ENCODE measurements at regions of chr16 and their contacts with region 1.

Region 1: GRCh38 chr16:67993189-67994039 is 5.9 kb downstream of the DPEP2 start:
- DNase-seq: peak; percentile 81
- H3K4me3 Mint-ChIP-seq: peak overlapping the region; percentile 76
- H3K27ac Mint-ChIP-seq: peak overlapping the region; percentile 95
- H3K4me1 Mint-ChIP-seq: peaks cover 22% of the 10 kb centered on the region
- H3K27me3 Mint-ChIP-seq: no peaks in the 10 kb centered on the region

Region 2: DNA sequence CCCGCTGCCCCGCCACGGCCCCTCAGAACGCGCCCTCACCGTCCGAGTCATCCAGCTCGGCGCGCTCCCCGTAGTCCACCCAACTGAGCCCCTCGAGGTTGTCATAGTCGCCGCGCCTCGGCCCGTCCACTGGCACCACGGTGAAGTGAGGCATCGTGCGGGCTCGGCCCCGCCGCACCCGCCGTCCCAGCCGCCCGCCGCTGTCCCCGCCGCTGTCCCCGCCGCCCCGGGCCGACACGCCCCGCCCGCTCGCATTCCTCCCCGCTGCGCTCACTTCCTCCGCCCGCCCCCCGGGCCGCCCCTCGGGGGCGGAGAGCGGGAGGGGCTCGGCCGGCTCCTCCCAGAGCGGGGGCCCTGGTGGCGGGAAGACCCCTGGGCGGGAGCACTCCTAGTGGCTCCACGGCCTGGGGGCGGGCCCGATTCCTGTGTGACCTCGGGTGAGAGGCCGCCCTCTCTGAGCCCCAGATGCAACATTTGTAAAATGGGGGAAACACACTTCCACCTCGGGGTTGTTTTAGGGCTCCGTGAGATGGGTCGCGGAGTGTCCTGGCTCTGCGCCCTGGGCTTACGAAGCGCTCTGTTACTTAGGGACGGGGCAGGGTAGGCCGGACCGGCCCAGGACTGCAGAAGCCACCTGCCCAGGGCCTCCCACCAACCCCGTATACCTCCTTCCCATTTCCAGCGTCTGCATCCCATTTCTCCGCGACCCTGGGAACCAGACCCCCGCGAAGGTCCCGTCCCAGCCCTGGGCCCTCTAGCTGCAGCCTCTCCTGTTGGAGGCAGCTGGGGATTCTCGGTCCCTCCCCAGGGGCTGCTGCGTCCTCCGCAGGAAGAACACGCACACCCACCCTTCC is 24.8 kb before region 1 on chr16 and contains the start of gene SLC12A4:
- intact Hi-C with region 1: loop called (anchors 1 kb)
- DNase-seq: peak; percentile 89
- H3K4me3 Mint-ChIP-seq: peak within 1 kb of the TSS; percentile 99
- H3K27ac Mint-ChIP-seq: peak within 1 kb of the TSS; percentile 96
- H3K4me1 Mint-ChIP-seq: peaks cover 40% of the 10 kb centered on the region
- H3K27me3 Mint-ChIP-seq: no peaks in the 10 kb centered on the region
- total RNA-seq, gene SLC12A4: 40.0 and 43.1 TPM in 2 replicates

Region 3: GRCh38 chr16:67979955-67980678 is 13.3 kb before region 1 on chr16 and contains the start of gene DPEP3:
- intact Hi-C with region 1: loop called (anchors 1 kb)
- DNase-seq: no peak
- H3K4me3 Mint-ChIP-seq: no peak within 1 kb of the TSS
- H3K27ac Mint-ChIP-seq: no peak within 1 kb of the TSS
- H3K4me1 Mint-ChIP-seq: peaks cover 17% of the 10 kb centered on the region
- H3K27me3 Mint-ChIP-seq: no peaks in the 10 kb centered on the region
- total RNA-seq, gene DPEP3: not detected in 2 replicates

Region 4: DNA sequence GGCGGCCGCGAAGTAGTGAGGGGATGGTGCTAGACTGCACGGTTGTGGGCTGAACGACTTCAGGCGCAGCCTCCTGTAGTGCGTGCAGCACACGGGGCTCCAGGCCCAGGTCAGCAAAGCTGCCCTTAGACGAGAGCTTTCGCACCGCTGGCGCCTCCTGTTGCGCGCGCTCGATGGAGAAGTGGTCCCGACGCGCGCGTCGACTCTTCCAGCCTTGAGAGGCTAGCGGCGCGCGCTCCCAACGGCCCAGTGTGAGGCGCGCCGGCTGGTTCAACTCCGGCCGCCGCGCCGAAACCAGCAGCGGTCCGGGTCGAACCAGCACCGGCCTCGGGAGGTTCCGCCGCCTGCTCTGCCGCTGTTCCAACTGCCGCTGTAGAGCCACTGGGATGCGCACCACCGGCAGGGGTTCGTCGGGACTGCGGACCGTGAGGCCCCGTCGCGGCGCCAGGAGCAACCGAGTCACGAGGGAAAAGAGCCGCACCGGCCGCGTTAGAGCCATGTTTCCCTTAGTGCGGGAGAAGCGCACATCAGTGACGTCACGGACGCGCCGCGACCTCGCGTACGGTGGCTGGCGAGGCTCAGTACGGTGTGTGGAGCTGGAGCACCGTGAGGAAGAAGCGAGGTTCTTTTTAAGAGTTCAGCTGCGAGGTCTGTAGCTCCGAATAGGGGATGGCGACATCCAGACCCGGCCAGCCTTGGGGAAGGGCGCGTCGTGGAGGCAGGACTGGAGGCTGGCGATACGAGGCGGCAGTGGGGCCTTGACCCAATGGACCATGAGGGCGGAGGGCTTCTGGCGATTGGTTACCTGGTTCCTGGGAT is 29.5 kb after region 1 on chr16 and contains the starts of genes DDX28 and DUS2:
- intact Hi-C with region 1: loop called (anchors 1 kb)
- DNase-seq: peak; percentile 93
- H3K4me3 Mint-ChIP-seq: peak within 1 kb of the TSS; percentile 100
- H3K27ac Mint-ChIP-seq: peak within 1 kb of the TSS; percentile 96
- H3K4me1 Mint-ChIP-seq: peaks cover 26% of the 10 kb centered on the region
- H3K27me3 Mint-ChIP-seq: no peaks in the 10 kb centered on the region
- total RNA-seq, gene DDX28: 28.2 and 28.4 TPM in 2 replicates
- total RNA-seq, gene DUS2: 34.7 and 37.2 TPM in 2 replicates

Region 5: DNA sequence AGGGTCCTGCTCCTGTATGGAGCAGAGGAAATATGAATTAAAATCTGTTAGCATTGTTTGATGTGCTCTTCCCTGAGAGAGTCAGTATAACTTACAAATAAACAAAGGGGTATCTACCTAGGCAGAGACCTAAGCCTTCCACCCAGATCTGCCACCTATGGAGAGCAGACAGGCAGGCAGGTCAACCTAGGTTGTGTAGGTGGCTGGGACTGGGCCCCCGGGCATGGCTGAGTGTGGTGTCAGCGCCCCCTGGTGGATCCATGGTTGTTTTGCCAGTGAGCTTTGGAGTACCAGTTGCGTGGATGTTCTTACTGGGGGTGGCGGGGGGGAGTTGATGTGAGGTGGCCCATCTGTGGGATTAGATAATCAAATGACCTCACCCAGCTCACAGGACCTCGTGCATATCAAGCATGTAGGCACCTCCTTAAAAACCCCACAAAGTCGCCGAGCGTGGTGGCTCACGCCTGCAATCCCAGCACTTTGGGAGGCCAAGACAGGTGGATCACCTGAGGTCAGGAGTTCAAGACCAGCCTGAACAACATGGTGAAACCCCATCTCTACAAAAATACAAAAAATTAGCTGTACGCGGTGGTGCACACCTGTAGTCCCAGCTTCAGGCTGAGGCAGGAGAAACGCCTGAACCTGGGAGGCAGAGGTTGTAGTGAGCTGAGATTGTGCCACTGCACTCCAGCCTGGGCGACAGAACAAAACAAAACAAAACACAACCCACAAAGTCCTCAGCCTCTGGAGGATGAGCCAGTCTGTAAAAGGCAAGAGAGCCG is 47.3 kb after region 1 on chr16:
- intact Hi-C with region 1: loop called (anchors 1 kb)
- DNase-seq: peak; percentile 81
- H3K4me3 Mint-ChIP-seq: no peak overlapping the region
- H3K27ac Mint-ChIP-seq: peak overlapping the region; percentile 70
- H3K4me1 Mint-ChIP-seq: peaks cover 19% of the 10 kb centered on the region
- H3K27me3 Mint-ChIP-seq: no peaks in the 10 kb centered on the region

Region 6: DNA sequence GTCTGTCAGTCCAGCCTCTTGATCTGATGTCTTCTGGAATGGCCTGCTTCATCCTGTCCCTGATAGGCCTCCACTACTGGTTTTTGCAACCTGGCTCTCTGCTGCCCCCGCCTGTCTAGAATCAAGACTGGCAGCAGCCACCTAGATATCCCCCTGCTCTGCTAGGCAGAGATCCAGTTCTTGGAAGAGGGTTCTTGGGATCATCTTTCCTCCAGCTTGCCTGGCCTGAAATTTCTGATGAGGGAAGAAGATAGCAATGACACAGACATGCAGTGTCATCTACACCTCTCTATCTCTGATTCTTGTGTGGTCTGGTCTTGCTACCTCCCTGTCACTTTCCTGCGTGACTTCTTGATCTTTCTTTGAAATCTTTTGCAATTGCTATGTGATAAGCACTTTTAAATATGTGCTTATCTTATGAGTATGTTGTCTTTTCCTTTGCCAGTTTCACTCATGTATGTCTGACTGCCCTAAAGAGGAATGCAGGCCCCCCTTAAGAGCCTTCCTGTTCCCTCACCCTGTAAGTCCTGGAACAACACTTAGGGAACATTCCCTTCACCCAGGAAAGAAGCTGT is 71.5 kb after region 1 on chr16:
- intact Hi-C with region 1: loop called (anchors 1 kb)
- DNase-seq: peak; percentile 59
- H3K4me3 Mint-ChIP-seq: no peak overlapping the region
- H3K27ac Mint-ChIP-seq: peak overlapping the region; percentile 75
- H3K4me1 Mint-ChIP-seq: peaks cover 81% of the 10 kb centered on the region
- H3K27me3 Mint-ChIP-seq: no peaks in the 10 kb centered on the region

Region 7: DNA sequence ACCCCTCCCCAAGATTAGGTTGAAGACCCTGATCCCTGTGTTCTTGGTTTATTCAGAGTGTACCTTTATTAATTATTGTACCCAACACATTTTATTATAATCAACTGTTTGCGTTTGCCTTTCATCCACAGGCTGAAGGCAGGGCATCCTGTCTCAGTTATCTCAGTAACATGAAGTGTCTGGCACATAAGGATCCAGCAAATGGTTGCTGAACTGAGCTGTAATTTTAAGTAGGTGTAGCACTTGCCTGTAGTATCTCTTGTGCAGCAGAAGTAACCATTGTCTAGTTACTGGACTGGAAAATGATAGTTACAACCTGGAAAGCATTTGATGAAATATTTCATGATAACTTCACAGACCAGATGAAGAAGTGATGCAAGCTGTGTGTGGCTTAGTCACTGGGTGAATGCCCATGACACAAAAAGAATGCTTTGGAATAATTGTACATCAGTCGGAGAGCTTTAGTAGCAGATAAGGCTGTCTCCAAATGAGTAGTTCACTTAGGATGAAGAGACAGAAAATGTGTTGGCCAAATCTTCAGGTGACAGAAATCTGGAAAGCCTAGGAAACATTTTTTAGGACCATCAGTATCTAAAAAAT is 185.9 kb after region 1 on chr16:
- intact Hi-C with region 1: no loop called
- DNase-seq: no peak
- H3K4me3 Mint-ChIP-seq: no peak overlapping the region
- H3K27ac Mint-ChIP-seq: no peak overlapping the region
- H3K4me1 Mint-ChIP-seq: no peaks in the 10 kb centered on the region
- H3K27me3 Mint-ChIP-seq: no peaks in the 10 kb centered on the region

Region 8: DNA sequence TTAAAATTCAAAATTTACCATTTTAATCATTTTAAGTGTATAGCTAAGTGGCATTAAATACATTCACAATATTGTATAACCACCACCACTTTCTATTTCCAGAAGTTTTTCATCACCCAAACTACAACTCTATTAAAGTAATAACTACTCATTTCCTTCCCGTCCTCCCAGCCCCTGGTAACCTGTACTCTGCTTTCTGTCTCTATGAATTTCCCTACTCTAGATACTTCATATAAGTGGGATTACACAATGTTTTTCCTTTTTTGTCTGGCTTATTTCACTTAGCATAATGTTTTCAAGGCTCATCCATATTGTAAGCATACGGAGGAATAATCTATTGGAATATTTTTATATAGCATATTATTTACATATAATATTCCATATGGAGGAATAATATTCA is 212.8 kb after region 1 on chr16:
- intact Hi-C with region 1: no loop called
- DNase-seq: no peak
- H3K4me3 Mint-ChIP-seq: no peak overlapping the region
- H3K27ac Mint-ChIP-seq: no peak overlapping the region
- H3K4me1 Mint-ChIP-seq: peaks cover 18% of the 10 kb centered on the region
- H3K27me3 Mint-ChIP-seq: no peaks in the 10 kb centered on the region

Region 9: DNA sequence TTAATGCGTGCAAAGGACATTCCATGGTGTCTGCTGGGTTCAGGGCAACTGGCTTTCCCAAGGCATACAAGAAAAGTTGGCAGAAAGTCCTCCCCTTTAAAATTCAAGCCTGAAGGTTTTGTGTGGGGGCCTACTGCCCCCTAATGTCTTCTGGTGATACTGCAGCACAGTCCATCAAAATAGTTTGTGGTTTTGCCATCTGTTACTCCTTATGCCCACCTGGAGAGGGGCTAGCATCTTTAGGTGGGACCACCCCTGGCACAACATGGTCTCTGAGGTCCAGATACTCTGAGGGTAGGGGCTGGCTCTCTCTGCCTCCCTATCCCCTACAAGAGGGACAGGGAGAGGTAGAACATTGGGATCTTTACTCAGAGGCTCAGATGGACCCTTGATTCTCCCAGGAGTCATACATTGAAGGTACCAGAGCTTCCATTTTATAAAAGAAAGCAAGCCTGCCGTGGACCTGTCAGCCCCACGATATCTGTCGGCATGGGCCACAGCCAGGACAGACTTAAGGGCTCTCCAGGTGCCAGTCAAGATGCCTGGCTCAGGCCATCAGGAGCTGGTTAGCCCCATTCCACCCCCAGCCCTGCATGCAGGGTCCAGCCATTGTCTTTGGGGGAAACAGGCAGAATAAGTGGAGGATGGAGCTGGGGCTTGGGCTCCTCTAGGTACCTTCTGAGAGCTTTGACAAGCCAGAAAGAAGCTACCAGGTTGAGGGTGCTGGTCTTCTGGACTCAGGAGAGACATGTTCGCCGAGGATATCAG is 236.2 kb after region 1 on chr16:
- intact Hi-C with region 1: loop called (anchors 1 kb)
- DNase-seq: no peak
- H3K4me3 Mint-ChIP-seq: no peak overlapping the region
- H3K27ac Mint-ChIP-seq: peak overlapping the region; percentile 63
- H3K4me1 Mint-ChIP-seq: peaks cover 48% of the 10 kb centered on the region
- H3K27me3 Mint-ChIP-seq: no peaks in the 10 kb centered on the region

Region 10: GRCh38 chr16:68244903-68245853 is 251.8 kb after region 1 on chr16 and contains the start of gene PLA2G15:
- intact Hi-C with region 1: no loop called
- DNase-seq: peak; percentile 93
- H3K4me3 Mint-ChIP-seq: peak within 1 kb of the TSS; percentile 99
- H3K27ac Mint-ChIP-seq: peak within 1 kb of the TSS; percentile 82
- H3K4me1 Mint-ChIP-seq: peaks cover 18% of the 10 kb centered on the region
- H3K27me3 Mint-ChIP-seq: peaks cover 5% of the 10 kb centered on the region
- total RNA-seq, gene PLA2G15: 8.6 and 8.8 TPM in 2 replicates